ENCODE measurements at regions of chr7 and their contacts with region 1.

Region 1: GRCh38 chr7:146503844-146504243 is 387.2 kb downstream of the CNTNAP2 start:
- DNase-seq: no peak
- H3K4me3 Mint-ChIP-seq: no peak overlapping the region
- H3K27ac Mint-ChIP-seq: no peak overlapping the region
- H3K4me1 Mint-ChIP-seq: no peaks in the 10 kb centered on the region
- H3K27me3 Mint-ChIP-seq: no peaks in the 10 kb centered on the region

Region 2: DNA sequence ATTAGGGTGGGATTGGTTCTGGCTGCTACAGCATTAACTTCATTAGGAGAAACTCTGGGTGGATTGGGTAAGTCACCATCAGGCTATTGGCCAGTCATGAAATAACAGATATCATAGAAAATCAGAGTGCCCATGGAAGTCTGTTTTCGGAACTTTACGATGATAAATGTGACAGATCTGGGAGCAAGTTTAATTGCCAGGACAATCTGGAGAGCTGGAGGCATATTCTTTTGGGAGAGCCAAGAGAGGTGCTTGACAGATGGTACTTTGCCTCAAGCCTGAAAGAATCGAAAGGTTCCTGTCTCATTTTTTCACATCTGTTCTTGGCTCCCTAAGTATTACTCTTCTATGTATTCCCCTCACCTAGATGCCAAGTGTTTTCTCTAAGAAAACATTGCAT is 17.3 kb before region 1 on chr7:
- intact Hi-C with region 1: loop called (anchors 1 kb)
- DNase-seq: no peak
- H3K4me3 Mint-ChIP-seq: no peak overlapping the region
- H3K27ac Mint-ChIP-seq: no peak overlapping the region
- H3K4me1 Mint-ChIP-seq: no peaks in the 10 kb centered on the region
- H3K27me3 Mint-ChIP-seq: no peaks in the 10 kb centered on the region